ENCODE measurements at regions of chr14 and their contacts with region 1.

Region 1: GRCh38 chr14:22918804-22919600 is at the start of gene RBM23:
- DNase-seq: peak; percentile 100
- ATAC-seq: peak; percentile 98
- H3K4me3 ChIP-seq: peak within 1 kb of the TSS; percentile 96
- H3K27ac ChIP-seq: peak within 1 kb of the TSS; percentile 97
- H3K4me1 ChIP-seq: peaks cover 8% of the 10 kb centered on the region
- H3K27me3 ChIP-seq: no peaks in the 10 kb centered on the region
- CTCF ChIP-seq: no peak
- EP300 ChIP-seq: no peak
- POLR2A ChIP-seq: peak; percentile 87
- RAD21 ChIP-seq: no peak
- polyA plus RNA-seq, gene RBM23: 60.7 to 65.7 TPM

Region 2: DNA sequence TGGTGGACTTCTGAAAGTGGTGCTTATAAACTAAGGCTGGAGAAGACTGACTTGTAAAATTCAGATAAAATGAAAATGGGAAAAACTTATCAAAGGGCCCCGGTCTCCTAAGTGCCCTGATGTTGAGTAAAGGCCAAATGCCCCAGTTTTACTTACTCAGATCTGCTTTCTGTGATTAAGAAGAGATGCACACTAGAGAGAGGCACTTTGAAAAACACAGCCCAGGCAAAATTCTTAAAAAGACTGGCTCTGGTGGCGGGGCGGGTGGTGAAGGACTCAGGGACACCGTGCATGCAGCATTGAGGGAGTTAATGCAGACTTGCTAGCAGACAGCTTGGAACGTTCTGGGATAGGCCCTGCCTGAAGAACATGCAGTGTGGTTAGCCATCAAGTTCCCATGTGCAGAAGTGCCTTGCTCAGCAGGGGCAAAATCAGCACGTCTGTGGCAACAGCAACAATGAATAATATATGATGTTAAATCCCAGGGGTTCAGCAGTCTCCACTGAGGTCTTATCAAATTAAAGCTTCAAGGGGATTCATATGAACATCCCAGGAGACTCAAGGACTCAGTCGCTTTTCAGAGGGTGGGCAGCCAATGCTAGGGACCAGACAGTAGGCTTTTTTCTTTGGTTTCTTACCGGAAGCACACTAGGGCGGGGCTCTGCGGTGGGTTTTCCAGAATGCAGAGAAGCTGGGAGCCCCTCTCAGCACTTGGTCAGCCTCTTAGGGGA is 435.0 kb before region 1 on chr14:
- CTCF ChIA-PET with region 1: no interaction called
- POLR2A ChIA-PET with region 1: no interaction called
- RAD21 ChIA-PET with region 1: no interaction called
- SMC1A ChIA-PET with region 1: no interaction called
- in situ Hi-C with region 1: no loop called
- intact Hi-C with region 1: loop called (anchors 10 kb)
- DNase-seq: no peak
- ATAC-seq: peak; percentile 39
- H3K4me3 ChIP-seq: peak overlapping the region; percentile 72
- H3K27ac ChIP-seq: peak overlapping the region; percentile 98
- H3K4me1 ChIP-seq: peaks cover 84% of the 10 kb centered on the region
- H3K27me3 ChIP-seq: no peaks in the 10 kb centered on the region
- CTCF ChIP-seq: no peak
- EP300 ChIP-seq: no peak
- POLR2A ChIP-seq: peak; percentile 52
- RAD21 ChIP-seq: no peak

Region 3: DNA sequence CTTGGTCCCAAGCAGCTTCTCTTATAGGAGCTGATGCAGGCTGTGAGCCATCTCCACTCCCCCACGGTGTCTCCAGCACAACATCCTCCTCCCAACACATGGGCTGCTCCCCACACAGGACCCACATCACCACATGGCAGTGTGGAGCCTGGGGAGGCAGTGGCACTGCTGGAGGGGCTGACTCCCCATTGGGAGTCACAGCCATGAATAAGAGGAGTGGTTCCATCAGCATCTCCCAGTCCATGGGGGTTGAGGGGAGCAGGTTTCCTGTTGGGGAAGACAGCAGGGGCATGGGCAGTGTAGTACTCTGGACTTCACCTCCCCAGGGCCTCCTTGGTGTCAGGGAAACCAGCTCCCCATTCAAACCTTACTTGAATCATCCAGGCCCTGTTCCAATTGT is 193.0 kb before region 1 on chr14:
- CTCF ChIA-PET with region 1: no interaction called
- POLR2A ChIA-PET with region 1: no interaction called
- RAD21 ChIA-PET with region 1: no interaction called
- SMC1A ChIA-PET with region 1: no interaction called
- in situ Hi-C with region 1: no loop called
- intact Hi-C with region 1: no loop called
- DNase-seq: no peak
- ATAC-seq: no peak
- H3K4me3 ChIP-seq: no peak overlapping the region
- H3K27ac ChIP-seq: no peak overlapping the region
- H3K4me1 ChIP-seq: no peaks in the 10 kb centered on the region; the same call in 1 of the 2 replicates
- H3K27me3 ChIP-seq: no peaks in the 10 kb centered on the region
- CTCF ChIP-seq: no peak
- EP300 ChIP-seq: no peak
- POLR2A ChIP-seq: no peak
- RAD21 ChIP-seq: no peak

Region 4: GRCh38 chr14:22748631-22749068 is 170.4 kb before region 1 on chr14:
- CTCF ChIA-PET with region 1: no interaction called
- POLR2A ChIA-PET with region 1: no interaction called
- RAD21 ChIA-PET with region 1: no interaction called
- SMC1A ChIA-PET with region 1: no interaction called
- in situ Hi-C with region 1: no loop called
- intact Hi-C with region 1: no loop called
- DNase-seq: no peak
- ATAC-seq: peak; percentile 88
- H3K4me3 ChIP-seq: peak overlapping the region; percentile 43; the same call in 1 of the 2 replicates
- H3K27ac ChIP-seq: peak overlapping the region; percentile 45
- H3K4me1 ChIP-seq: peaks cover 15% of the 10 kb centered on the region
- H3K27me3 ChIP-seq: no peaks in the 10 kb centered on the region
- CTCF ChIP-seq: 0 out of 6 replicates have a peak, but pooled peaks of 1 of the 3 experiments have one; percentile 7
- EP300 ChIP-seq: no peak
- POLR2A ChIP-seq: no peak
- RAD21 ChIP-seq: 0 out of 2 replicates have a peak, but pooled peaks have one; percentile 20

Region 5: DNA sequence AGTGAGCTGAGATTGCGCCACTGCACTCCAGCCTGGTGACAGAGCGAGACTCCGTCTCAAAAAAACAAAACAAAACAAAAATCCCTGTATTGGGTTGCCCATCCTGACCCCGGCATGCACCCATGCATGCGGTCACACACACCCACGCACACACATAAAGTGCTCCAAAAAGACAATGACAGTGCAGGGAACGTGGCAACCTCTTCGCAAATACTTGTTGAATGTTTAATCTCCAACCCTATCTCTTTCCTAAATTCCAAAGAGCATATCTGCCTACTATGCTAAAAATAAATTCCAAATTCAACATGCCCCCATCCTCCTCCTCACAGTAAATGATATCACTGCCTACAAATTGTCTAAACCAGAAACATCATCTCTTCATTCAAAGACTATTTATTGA is 117.3 kb before region 1 on chr14:
- CTCF ChIA-PET with region 1: no interaction called
- POLR2A ChIA-PET with region 1: no interaction called
- RAD21 ChIA-PET with region 1: no interaction called
- SMC1A ChIA-PET with region 1: no interaction called
- in situ Hi-C with region 1: no loop called
- intact Hi-C with region 1: no loop called
- DNase-seq: no peak
- ATAC-seq: no peak
- H3K4me3 ChIP-seq: no peak overlapping the region
- H3K27ac ChIP-seq: peak overlapping the region; percentile 98; the same call in 1 of the 2 replicates
- H3K4me1 ChIP-seq: peaks cover 64% of the 10 kb centered on the region
- H3K27me3 ChIP-seq: no peaks in the 10 kb centered on the region
- CTCF ChIP-seq: no peak
- EP300 ChIP-seq: no peak
- POLR2A ChIP-seq: no peak
- RAD21 ChIP-seq: no peak

Region 6: GRCh38 chr14:22872033-22872832 is 46.8 kb before region 1 on chr14:
- CTCF ChIA-PET with region 1: interaction called, 25 read pairs
- POLR2A ChIA-PET with region 1: interaction called, 5 read pairs
- RAD21 ChIA-PET with region 1: interaction called, 11 read pairs
- SMC1A ChIA-PET with region 1: interaction called, 5 read pairs
- in situ Hi-C with region 1: no loop called
- intact Hi-C with region 1: loop called (anchors 5 kb)
- DNase-seq: no peak
- ATAC-seq: peak; percentile 56
- H3K4me3 ChIP-seq: peak overlapping the region; percentile 74
- H3K27ac ChIP-seq: peak overlapping the region; percentile 93
- H3K4me1 ChIP-seq: peaks cover 8% of the 10 kb centered on the region
- H3K27me3 ChIP-seq: no peaks in the 10 kb centered on the region
- CTCF ChIP-seq: peak; percentile 95 to 98 (median 95)
- EP300 ChIP-seq: no peak
- POLR2A ChIP-seq: no peak
- RAD21 ChIP-seq: peak; percentile 75

Region 7: GRCh38 chr14:22886500-22887259 is 32.3 kb before region 1 on chr14:
- CTCF ChIA-PET with region 1: interaction called, 7 read pairs
- POLR2A ChIA-PET with region 1: interaction called, 51 read pairs
- RAD21 ChIA-PET with region 1: interaction called, 15 read pairs
- SMC1A ChIA-PET with region 1: interaction called, 4 read pairs
- in situ Hi-C with region 1: no loop called
- intact Hi-C with region 1: no loop called
- DNase-seq: peak; percentile 45
- ATAC-seq: peak; percentile 72
- H3K4me3 ChIP-seq: peak overlapping the region; percentile 91
- H3K27ac ChIP-seq: peak overlapping the region; percentile 86
- H3K4me1 ChIP-seq: peaks cover 35% of the 10 kb centered on the region
- H3K27me3 ChIP-seq: no peaks in the 10 kb centered on the region
- CTCF ChIP-seq: peak; percentile 13 to 46 (median 18); a peak in 4 of 6 replicates
- EP300 ChIP-seq: no peak; a peak in 1 of 4 replicates
- POLR2A ChIP-seq: peak; percentile 79; the same call in 1 of the 2 replicates
- RAD21 ChIP-seq: no peak

Region 8: DNA sequence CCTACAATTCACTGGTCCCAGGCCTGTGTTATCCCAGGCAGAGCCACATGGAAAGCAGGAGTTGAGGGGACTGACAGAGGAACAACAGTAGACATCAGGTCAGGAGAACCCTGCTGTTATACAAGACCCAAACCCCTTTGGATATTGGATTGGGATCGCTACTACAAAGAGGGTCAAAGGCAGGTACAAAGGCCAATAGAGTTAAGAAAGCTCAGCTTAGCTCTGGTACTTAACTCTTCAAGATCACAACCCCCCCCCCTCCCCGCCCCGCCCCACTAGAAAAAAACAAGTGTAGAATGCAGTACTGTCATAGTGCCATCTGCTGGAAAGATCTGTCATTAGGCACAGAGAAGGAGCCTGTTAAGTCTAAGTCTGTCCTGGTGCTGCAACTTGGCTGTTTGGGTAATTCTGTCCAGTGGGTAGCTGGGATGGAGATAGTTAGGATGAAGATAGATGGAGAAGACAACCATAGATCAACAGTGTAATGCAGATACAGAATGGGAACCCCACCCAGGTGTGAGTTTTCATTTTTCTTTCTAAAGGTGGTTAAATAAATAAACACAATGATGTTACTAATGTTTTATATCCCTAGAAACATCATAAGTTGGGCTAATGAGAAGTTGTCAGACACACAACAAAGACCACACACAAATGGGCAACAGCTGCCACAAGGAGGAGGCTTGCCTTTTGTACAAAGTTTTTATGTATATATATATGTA is 18.8 kb before region 1 on chr14:
- CTCF ChIA-PET with region 1: interaction called, 40 read pairs
- POLR2A ChIA-PET with region 1: interaction called, 4 read pairs
- RAD21 ChIA-PET with region 1: interaction called, 8 read pairs
- SMC1A ChIA-PET with region 1: interaction called, 9 read pairs
- in situ Hi-C with region 1: no loop called
- intact Hi-C with region 1: no loop called
- DNase-seq: peak; percentile 47
- ATAC-seq: peak; percentile 95
- H3K4me3 ChIP-seq: no peak overlapping the region
- H3K27ac ChIP-seq: no peak overlapping the region
- H3K4me1 ChIP-seq: no peaks in the 10 kb centered on the region
- H3K27me3 ChIP-seq: no peaks in the 10 kb centered on the region
- CTCF ChIP-seq: peak; percentile 65 to 76 (median 69)
- EP300 ChIP-seq: no peak
- POLR2A ChIP-seq: no peak
- RAD21 ChIP-seq: peak; percentile 89

Region 9: GRCh38 chr14:22955702-22956569 is 36.9 kb after region 1 on chr14:
- CTCF ChIA-PET with region 1: interaction called, 3 read pairs
- POLR2A ChIA-PET with region 1: interaction called, 7 read pairs
- RAD21 ChIA-PET with region 1: interaction called, 15 read pairs
- SMC1A ChIA-PET with region 1: interaction called, 11 read pairs
- in situ Hi-C with region 1: no loop called
- intact Hi-C with region 1: no loop called
- DNase-seq: no peak
- ATAC-seq: no peak
- H3K4me3 ChIP-seq: peak overlapping the region; percentile 85
- H3K27ac ChIP-seq: peak overlapping the region; percentile 90
- H3K4me1 ChIP-seq: no peaks in the 10 kb centered on the region
- H3K27me3 ChIP-seq: no peaks in the 10 kb centered on the region
- CTCF ChIP-seq: no peak
- EP300 ChIP-seq: no peak
- POLR2A ChIP-seq: no peak
- RAD21 ChIP-seq: no peak

Region 10: GRCh38 chr14:23160924-23161538 is 242.0 kb after region 1 on chr14:
- CTCF ChIA-PET with region 1: no interaction called
- POLR2A ChIA-PET with region 1: no interaction called
- RAD21 ChIA-PET with region 1: no interaction called
- SMC1A ChIA-PET with region 1: no interaction called
- in situ Hi-C with region 1: no loop called
- intact Hi-C with region 1: no loop called
- DNase-seq: no peak
- ATAC-seq: no peak
- H3K4me3 ChIP-seq: no peak overlapping the region
- H3K27ac ChIP-seq: no peak overlapping the region
- H3K4me1 ChIP-seq: no peaks in the 10 kb centered on the region
- H3K27me3 ChIP-seq: peaks cover 0 to 5% of the 10 kb centered on the region in 2 experiments; a peak in 3 of 4 replicates
- CTCF ChIP-seq: no peak
- EP300 ChIP-seq: no peak
- POLR2A ChIP-seq: no peak
- RAD21 ChIP-seq: no peak